WTC11 (cell line): ENCODE measurements at regions of chr1 and their contacts with region 1.

Region 1: GRCh38 chr1:153390938-153391710 is at the start of gene S100A8:
- DNase-seq: no peak
- ATAC-seq: no peak
- H3K4me3 Mint-ChIP-seq: no peak within 1 kb of the TSS
- H3K27ac Mint-ChIP-seq: no peak within 1 kb of the TSS
- H3K4me1 Mint-ChIP-seq: no peaks in the 10 kb centered on the region
- H3K27me3 Mint-ChIP-seq: peaks cover 4% of the 10 kb centered on the region
- CTCF ChIP-seq: no peak
- total RNA-seq, gene S100A8: 1.4 TPM in 1 of 3 replicates, not detected in the others

Region 2: DNA sequence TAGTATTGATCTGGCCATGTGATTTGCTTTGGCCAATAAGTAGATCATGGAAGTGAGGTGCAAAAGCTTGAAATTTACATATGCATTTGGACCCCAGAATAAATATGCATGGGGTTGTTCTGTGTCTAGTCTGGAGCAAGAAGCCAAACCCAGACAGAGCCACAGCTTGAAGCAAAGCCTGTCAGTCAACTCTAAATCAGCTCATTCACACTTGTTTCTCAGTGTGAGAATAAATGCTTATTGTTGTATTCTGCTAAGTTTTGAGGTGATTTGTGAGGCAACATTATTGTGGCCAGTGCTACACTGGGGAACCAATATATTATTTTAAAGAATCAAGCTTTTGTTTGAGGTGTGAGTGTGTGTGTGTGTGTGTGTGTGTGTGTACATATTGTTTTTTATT is 66.2 kb before region 1 on chr1:
- CTCF ChIA-PET with region 1: no interaction called
- POLR2A ChIA-PET with region 1: no interaction called
- DNase-seq: no peak
- ATAC-seq: no peak
- H3K4me3 Mint-ChIP-seq: no peak overlapping the region
- H3K27ac Mint-ChIP-seq: no peak overlapping the region
- H3K4me1 Mint-ChIP-seq: no peaks in the 10 kb centered on the region
- H3K27me3 Mint-ChIP-seq: peaks cover 14% of the 10 kb centered on the region
- CTCF ChIP-seq: no peak

Region 3: DNA sequence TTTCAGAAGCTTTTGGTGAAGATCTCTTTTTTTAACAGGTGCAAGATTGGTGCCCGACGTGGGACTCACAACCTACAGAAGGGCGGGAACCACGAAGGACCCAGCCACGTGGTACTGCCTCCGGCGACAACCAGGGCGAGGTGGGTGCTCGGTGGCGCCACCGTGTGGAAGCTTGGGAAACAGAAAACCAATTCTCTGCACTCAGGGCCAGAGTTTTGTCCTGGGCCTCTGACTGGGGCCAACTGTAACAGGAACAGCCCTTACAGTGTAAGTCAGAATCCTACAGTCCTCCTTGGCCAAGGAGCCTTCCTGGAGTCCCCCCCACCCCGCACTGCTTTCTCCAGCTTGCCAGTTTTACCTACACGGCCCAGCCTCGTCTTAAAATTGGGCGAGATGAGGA is 13.6 kb after region 1 on chr1:
- CTCF ChIA-PET with region 1: interaction called, 10 read pairs
- POLR2A ChIA-PET with region 1: no interaction called
- DNase-seq: peak; percentile 81
- ATAC-seq: peak; percentile 68
- H3K4me3 Mint-ChIP-seq: no peak overlapping the region
- H3K27ac Mint-ChIP-seq: no peak overlapping the region
- H3K4me1 Mint-ChIP-seq: peaks cover 18% of the 10 kb centered on the region
- H3K27me3 Mint-ChIP-seq: peaks cover 40% of the 10 kb centered on the region
- CTCF ChIP-seq: peak; percentile 79

Region 4: GRCh38 chr1:153447498-153448170 is 56.5 kb after region 1 on chr1:
- CTCF ChIA-PET with region 1: no interaction called
- POLR2A ChIA-PET with region 1: no interaction called
- DNase-seq: no peak
- ATAC-seq: no peak
- H3K4me3 Mint-ChIP-seq: no peak overlapping the region
- H3K27ac Mint-ChIP-seq: no peak overlapping the region
- H3K4me1 Mint-ChIP-seq: no peaks in the 10 kb centered on the region
- H3K27me3 Mint-ChIP-seq: peaks cover 13% of the 10 kb centered on the region
- CTCF ChIP-seq: no peak